Activated naive CD4-positive, alpha-beta T cell treated with anti-CD3 and anti-CD28 coated beads for 36 hours (primary cell): ENCODE measurements at regions of chr5 and their contacts with region 1.

Region 1: DNA sequence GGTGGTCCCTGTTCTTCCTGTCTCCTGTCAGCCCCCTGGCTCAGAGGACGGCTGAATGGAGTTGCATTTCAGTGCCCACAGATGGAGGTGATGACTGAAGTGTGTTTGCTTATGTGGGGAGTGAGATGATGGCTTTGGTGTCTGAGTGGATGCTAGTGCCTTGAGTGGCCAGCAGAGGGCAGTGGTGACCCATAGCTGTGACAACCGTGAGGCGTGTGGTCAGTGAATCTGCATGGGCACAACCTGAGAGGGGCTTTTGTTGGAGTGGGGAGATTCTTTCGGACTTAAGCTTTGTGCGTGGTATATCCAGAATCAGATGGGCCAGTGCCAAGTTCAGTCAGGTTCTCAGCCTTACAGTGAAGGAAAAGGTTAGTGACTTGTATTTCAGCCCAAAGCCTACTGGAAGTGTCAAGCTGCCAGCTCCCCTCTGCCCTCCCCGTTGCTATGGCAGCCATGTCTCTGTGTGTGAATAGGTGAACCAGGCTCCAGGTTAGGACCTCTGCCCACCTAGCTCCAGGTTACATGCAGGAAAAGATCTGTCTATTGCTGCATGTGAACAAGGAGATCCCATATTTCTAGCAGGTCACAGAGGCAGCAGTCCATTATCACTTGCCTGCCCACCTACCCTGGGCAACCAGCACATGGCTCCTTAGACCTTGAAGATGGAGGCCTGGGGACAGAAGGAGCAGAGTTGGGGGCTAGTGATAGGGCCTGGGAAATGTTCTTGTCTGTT is 14.7 kb upstream of the CXXC5 start:
- DNase-seq: peak; percentile 71
- H3K4me3 Mint-ChIP-seq: no peak overlapping the region
- H3K27ac Mint-ChIP-seq: no peak overlapping the region
- H3K4me1 Mint-ChIP-seq: peaks cover 28% of the 10 kb centered on the region
- H3K27me3 Mint-ChIP-seq: no peaks in the 10 kb centered on the region

Region 2: DNA sequence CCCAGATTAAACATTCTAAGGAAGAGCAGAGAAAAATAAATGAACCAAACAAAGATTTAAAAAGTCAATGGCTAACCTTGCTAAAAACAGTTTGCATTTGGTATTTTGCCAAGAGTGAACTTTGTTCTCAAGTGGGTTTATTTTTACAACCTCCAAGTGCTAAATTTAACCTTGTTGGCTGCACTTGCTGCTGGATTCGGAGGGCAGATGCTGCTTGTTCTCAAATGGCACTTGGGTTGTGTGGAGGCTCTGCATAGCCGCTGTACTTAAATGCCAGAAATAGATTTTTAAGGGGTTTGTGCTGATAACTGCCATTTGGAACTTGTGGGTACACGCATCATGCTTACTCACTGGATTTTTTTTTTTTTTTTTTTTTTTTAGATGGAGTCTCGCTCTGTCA is 216.2 kb before region 1 on chr5:
- CTCF ChIA-PET with region 1: interaction called, 13 read pairs
- intact Hi-C with region 1: loop called (anchors 2 kb)
- DNase-seq: no peak
- H3K4me3 Mint-ChIP-seq: no peak overlapping the region
- H3K27ac Mint-ChIP-seq: no peak overlapping the region
- H3K4me1 Mint-ChIP-seq: peaks cover 50% of the 10 kb centered on the region
- H3K27me3 Mint-ChIP-seq: no peaks in the 10 kb centered on the region

Region 3: GRCh38 chr5:139560752-139561654 is 72.5 kb before region 1 on chr5 and contains the start of gene UBE2D2:
- CTCF ChIA-PET with region 1: interaction called, 5 read pairs
- intact Hi-C with region 1: loop called (anchors 1 kb)
- DNase-seq: peak; percentile 98
- H3K4me3 Mint-ChIP-seq: peak within 1 kb of the TSS; percentile 94
- H3K27ac Mint-ChIP-seq: peak within 1 kb of the TSS; percentile 96
- H3K4me1 Mint-ChIP-seq: peaks cover 33% of the 10 kb centered on the region
- H3K27me3 Mint-ChIP-seq: no peaks in the 10 kb centered on the region
- total RNA-seq, gene UBE2D2: 221 to 243 TPM

Region 4: DNA sequence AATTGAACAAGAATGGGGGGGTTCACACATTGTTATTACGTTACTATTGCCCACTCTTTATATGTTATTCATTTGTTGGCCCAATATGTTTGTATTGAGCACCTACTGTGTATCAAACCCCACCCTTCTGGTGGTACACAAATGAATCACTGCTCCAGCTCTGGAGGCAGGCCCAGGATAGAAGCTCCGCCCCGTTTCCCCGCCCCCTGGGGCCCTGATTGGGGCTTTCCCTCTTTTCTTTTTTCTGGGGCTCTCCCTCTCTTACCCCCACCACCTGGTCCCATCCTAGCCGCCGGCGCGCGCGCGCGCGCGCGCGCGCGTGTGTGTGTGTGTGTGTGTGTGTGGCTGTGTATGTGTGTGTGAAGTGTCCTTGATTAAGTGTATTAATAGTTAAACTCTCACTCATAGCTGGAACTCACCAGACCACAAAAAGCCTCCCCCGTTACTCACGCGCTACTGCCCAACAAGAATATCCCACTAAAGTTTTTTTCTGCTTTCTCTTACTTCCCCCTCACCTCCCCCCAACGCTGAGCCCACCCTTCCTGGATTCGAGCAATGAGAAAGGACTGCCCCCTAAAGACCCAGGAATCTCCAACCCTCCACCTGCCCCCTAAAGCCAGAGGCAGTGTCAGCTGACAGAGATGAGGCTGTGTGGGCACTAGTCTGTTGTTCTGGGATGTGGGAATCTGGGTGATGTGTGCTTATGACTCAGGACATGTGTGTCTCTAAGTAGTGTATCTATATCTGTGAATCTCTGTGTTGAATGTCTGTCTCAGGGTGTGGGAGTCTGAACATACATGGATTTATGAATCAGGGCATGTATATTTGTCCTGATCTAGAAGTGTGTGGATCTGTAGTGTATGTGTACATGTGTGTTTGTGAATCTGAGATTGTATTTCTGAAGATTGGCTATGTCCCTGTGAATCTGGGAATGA is 18.7 kb after region 1 on chr5:
- CTCF ChIA-PET with region 1: interaction called, 9 read pairs
- intact Hi-C with region 1: loop called (anchors 1 kb)
- DNase-seq: peak; percentile 82
- H3K4me3 Mint-ChIP-seq: no peak overlapping the region
- H3K27ac Mint-ChIP-seq: no peak overlapping the region
- H3K4me1 Mint-ChIP-seq: peaks cover 31% of the 10 kb centered on the region
- H3K27me3 Mint-ChIP-seq: peaks cover 49% of the 10 kb centered on the region

Region 5: GRCh38 chr5:139711067-139711905 is 77.8 kb after region 1 on chr5:
- CTCF ChIA-PET with region 1: interaction called, 12 read pairs
- intact Hi-C with region 1: loop called (anchors 1 kb)
- DNase-seq: peak; percentile 66
- H3K4me3 Mint-ChIP-seq: peak overlapping the region; percentile 62
- H3K27ac Mint-ChIP-seq: no peak overlapping the region
- H3K4me1 Mint-ChIP-seq: peaks cover 10% of the 10 kb centered on the region
- H3K27me3 Mint-ChIP-seq: peaks cover 2% of the 10 kb centered on the region

Region 6: GRCh38 chr5:139774980-139775661 is 141.7 kb after region 1 on chr5:
- CTCF ChIA-PET with region 1: interaction called, 110 read pairs
- intact Hi-C with region 1: no loop called
- DNase-seq: peak; percentile 84
- H3K4me3 Mint-ChIP-seq: peak overlapping the region; percentile 14
- H3K27ac Mint-ChIP-seq: no peak overlapping the region
- H3K4me1 Mint-ChIP-seq: peaks cover 8% of the 10 kb centered on the region
- H3K27me3 Mint-ChIP-seq: no peaks in the 10 kb centered on the region